ENCODE measurements at regions of chr7 and their contacts with region 1.

Region 1: DNA sequence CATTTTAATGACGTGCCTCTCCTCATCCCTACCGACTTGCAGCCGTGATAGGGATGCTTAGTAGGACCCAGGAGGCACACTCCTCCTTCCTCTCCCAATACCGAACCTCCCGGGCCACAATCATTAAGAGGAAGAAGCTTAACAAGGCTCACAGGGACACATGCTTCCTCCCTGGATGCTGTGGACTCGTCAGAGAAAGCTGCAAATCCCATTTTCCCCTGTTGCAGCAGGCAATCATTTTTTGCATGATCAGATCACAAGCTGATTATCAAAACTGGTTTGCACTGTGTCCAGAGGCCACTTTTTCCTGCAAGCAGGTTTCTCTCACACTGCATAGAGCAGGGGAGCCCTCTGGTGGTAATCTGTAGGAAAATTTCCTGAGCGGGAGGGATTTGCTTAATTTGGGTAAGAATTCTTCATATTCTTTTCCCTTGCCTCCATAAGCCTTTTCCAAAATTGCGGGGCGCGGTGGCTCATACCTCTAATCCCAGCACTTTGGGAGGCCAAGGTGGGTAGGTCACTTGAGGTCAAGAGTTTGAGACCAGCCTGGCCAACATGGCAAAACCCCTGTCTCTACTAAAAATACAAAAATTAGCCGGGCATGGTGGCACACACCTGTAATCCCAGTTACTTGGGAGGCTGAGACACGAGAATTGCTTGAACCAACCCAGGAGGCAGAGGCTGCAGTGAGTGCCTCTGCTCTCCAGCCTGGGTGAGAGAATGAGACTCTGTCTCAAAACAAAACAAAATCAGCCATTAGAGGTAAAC is 16.1 kb upstream of the LAMB4 start:
- DNase-seq: peak; percentile 32 to 39
- ATAC-seq: peak; percentile 89

Region 2: DNA sequence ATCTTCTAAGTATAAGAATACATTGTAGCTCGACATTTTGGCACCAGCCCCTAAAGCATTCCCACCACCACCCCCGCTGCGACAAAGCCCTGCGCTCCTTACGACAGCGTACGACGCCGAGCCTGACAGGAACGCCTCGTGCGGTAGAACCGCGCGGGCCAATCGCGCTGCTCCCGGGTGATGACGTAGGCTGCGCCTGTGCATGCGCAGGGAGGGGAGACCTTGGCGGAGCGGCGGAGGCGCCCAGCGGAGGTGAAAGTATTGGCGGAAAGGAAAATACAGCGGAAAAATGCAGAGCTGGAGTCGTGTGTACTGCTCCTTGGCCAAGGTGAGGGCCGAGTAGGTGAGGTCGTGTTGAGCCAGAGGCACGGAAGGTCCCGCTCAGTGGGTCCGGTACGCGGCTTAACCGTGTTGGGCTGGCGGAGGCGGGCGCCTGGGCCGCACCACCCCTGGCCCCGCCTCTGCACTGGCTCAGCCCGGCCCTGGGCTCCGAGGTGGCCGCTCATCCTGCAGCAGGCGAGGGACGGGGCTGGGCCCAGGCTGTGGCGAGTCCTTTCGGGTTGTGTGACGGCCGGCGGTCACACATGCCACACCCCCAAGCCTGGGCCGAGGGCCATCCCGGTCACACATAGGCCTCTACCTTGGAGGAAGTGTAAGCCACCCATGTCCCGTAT is 255.2 kb before region 1 on chr7 and contains the start of gene DLD:
- intact Hi-C with region 1: loop called in 1 of 2 experiments (anchors 10 kb)
- DNase-seq: peak; percentile 95 to 96
- ATAC-seq: peak; percentile 95
- total RNA-seq, gene DLD: 129 to 139 TPM

Region 3: DNA sequence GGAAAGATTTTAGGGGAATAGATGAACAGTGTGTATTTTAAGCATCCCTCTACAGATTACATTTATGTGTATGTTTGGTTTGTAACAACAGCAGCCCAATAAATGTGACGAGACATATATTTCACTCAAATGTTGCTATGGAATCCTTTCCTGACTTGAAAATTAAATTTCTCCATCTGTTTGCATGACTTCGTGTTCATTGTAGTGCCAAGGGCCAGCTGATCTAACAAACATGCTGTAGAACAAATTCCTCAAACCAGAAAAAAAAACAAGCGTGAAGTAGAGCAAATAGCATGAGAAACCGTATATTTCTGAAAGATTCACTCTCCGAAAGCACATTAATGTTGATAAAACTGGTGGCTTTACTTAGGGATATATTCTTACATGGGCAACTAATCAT is 222.2 kb after region 1 on chr7:
- intact Hi-C with region 1: no loop called
- DNase-seq: no peak
- ATAC-seq: no peak